H1 (cell line): ENCODE measurements at regions of chr14 and their contacts with region 1.

Region 1: DNA sequence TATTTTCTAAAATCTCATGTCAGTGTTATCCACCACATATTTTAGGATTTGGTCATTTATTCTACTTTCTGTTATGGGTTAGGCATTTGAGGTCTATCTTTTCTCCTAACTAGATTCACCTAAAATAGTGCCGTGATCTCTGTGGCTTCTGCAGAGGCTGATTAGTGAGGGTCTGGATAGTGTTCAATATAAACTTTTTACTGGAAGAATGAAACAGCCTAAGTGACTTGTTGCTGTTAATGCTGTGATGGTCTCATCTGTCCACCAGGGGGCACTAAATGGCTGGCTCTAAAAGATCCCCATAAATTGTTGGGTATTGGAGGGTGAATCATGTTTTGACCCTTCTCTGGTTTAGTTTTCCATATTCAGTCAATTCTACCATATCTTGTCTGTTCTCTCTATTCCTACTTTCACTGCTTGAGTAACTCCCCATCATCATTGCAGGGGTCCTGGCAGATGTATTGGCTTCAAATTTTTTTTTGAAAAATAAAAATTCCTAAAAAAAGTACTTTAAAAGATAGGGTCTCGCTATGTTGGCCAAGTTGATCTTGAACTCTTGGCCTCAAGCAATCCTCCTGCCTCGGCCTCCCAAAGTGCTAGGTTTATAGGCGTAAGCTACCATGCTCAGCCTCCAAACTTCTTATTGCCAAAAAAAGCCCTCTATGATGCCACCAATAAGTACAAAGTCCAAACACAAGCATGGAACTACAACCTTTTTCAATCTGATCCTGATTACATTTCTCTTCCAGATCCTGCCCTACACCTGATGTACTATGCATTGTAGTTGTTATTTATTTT is 6.9 kb downstream of the PABPN1 start:
- DNase-seq: peak in 1 of 2 experiments; percentile 69
- H3K4me3 ChIP-seq: no peak overlapping the region
- H3K27ac ChIP-seq: no peak overlapping the region
- H3K4me1 ChIP-seq: no peaks in the 10 kb centered on the region
- H3K27me3 ChIP-seq: no peaks in the 10 kb centered on the region
- CTCF ChIP-seq: peak in 2 of 3 experiments; percentile 82 to 89; a peak in 3 of 4 replicates
- EP300 ChIP-seq: no peak
- POLR2A ChIP-seq: no peak; a peak in 1 of 3 replicates
- RAD21 ChIP-seq: peak; percentile 90 to 91

Region 2: GRCh38 chr14:23344442-23344841 is 16.3 kb after region 1 on chr14:
- CTCF ChIA-PET with region 1: interaction called, 27 read pairs
- POLR2A ChIA-PET with region 1: interaction called, 21 read pairs
- DNase-seq: no peak
- H3K4me3 ChIP-seq: no peak overlapping the region
- H3K27ac ChIP-seq: no peak overlapping the region
- H3K4me1 ChIP-seq: peaks cover 0 to 4% (median 1%) of the 10 kb centered on the region in 4 experiments; a peak in 3 of 7 replicates
- H3K27me3 ChIP-seq: no peaks in the 10 kb centered on the region
- CTCF ChIP-seq: no peak
- EP300 ChIP-seq: no peak
- POLR2A ChIP-seq: no peak
- RAD21 ChIP-seq: no peak

Region 3: GRCh38 chr14:23360496-23360895 is 32.4 kb after region 1 on chr14:
- CTCF ChIA-PET with region 1: interaction called, 78 read pairs
- POLR2A ChIA-PET with region 1: interaction called, 15 read pairs
- DNase-seq: peak in 1 of 2 experiments; percentile 66
- H3K4me3 ChIP-seq: no peak overlapping the region
- H3K27ac ChIP-seq: no peak overlapping the region
- H3K4me1 ChIP-seq: peaks cover 0 to 14% (median 10%) of the 10 kb centered on the region in 4 experiments; a peak in 5 of 7 replicates
- H3K27me3 ChIP-seq: no peaks in the 10 kb centered on the region; a peak in 1 of 7 replicates
- CTCF ChIP-seq: peak; percentile 67 to 91 (median 75)
- EP300 ChIP-seq: no peak
- POLR2A ChIP-seq: no peak
- RAD21 ChIP-seq: peak; percentile 56 to 67

Region 4: GRCh38 chr14:23373041-23373440 is 44.9 kb after region 1 on chr14:
- CTCF ChIA-PET with region 1: interaction called, 18 read pairs
- POLR2A ChIA-PET with region 1: interaction called, 19 read pairs
- DNase-seq: no peak
- H3K4me3 ChIP-seq: no peak overlapping the region
- H3K27ac ChIP-seq: no peak overlapping the region
- H3K4me1 ChIP-seq: peaks cover 0 to 10% (median 3%) of the 10 kb centered on the region in 4 experiments; a peak in 3 of 7 replicates
- H3K27me3 ChIP-seq: peaks cover 0 to 21% (median 12%) of the 10 kb centered on the region in 4 experiments; a peak in 6 of 7 replicates
- CTCF ChIP-seq: no peak
- EP300 ChIP-seq: no peak
- POLR2A ChIP-seq: no peak
- RAD21 ChIP-seq: no peak

Region 5: GRCh38 chr14:23555882-23556699 is 227.9 kb after region 1 on chr14 and contains the start of gene THTPA:
- CTCF ChIA-PET with region 1: interaction called, 18 read pairs
- POLR2A ChIA-PET with region 1: no interaction called
- DNase-seq: peak in 1 of 2 experiments; percentile 95
- H3K4me3 ChIP-seq: peak within 1 kb of the TSS; percentile 56 to 87 (median 80)
- H3K27ac ChIP-seq: peak within 1 kb of the TSS; percentile 56; the same call in 1 of the 2 replicates
- H3K4me1 ChIP-seq: peaks cover 0 to 19% (median 11%) of the 10 kb centered on the region in 4 experiments; a peak in 6 of 7 replicates
- H3K27me3 ChIP-seq: no peaks in the 10 kb centered on the region
- CTCF ChIP-seq: no peak
- EP300 ChIP-seq: no peak
- POLR2A ChIP-seq: peak in 1 of 2 experiments; percentile 68; a peak in 2 of 3 replicates
- RAD21 ChIP-seq: no peak
- total RNA-seq, gene THTPA: 14.8 and 16.6 TPM in 2 replicates